Esophagus muscularis mucosa (tissue), 4 donors: ENCODE measurements at regions of chr1 and their contacts with region 1.

Region 1: DNA sequence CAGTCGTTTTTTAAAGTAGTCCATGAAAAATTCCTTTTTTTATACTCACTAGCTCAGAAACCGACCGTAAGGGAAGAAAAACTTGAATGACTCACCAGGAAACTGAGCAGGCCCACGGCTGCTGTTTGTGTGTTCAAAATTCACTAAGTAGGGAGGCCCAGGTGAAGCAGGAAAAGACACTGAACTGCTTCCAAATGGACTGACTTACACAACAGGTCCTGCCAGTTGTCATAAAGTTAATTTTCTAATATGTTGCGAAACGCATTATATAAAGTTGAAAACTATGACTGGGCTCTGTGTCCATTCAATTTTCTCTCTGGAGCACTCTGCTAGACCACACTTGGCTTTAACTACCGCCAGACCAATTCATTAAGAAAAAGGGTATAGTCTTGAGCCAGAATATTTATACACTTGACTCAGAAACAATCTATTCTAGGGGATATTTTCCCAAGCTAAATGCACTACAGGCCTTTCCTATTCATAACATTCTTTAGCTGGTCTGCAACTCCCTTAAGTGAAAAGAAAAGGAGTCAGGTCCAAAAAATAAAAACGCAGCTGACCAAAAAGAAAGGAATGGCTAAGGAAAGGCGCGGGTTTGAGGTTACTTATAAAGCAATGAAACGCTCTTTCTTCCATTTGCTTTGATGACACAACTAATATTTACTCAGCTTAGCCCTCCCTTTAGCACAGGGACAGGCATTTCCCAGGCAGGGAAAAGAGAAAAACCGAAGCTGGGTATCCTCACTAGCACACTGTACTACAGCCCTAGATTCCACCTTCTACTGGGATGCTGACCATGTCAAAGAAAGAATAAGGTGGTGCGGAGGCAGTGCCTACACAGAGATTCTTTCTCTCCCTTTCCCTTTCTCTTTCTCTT is 306.3 kb upstream of the ESRRG start:
- DNase-seq: peak; percentile 82
- H3K4me3 ChIP-seq: peak overlapping the region in 1 of 4 donors; percentile 18
- H3K27ac ChIP-seq: peak overlapping the region; percentile 64 to 72 (median 68)
- H3K4me1 ChIP-seq: peaks cover 6 to 20% (median 19%) of the 10 kb centered on the region in 4 donors
- H3K27me3 ChIP-seq: no peaks in the 10 kb centered on the region
- CTCF ChIP-seq: no peak
- EP300 ChIP-seq: no peak
- POLR2A ChIP-seq: no peak

Region 2: DNA sequence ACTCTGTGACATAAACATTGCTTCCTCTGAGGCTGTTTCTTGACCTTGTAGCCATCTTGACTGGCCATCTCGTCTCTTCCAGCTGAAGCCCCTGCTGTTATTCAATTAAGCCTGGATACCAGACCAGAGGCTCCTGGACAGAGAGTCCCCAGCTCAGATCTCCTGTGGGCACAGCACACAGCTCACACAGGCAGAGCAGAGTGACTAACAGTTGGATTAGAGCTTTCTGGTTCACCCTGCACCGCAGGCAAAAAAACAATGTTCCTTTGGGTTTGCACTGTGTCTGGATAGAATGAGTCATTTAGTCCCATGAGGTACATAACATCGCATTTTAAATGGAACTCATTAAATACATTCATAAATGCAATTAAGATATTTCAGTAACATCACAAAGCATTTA is 572.8 kb before region 1 on chr1:
- intact Hi-C with region 1: no loop called
- DNase-seq: no peak
- H3K4me3 ChIP-seq: no peak overlapping the region
- H3K27ac ChIP-seq: no peak overlapping the region
- H3K4me1 ChIP-seq: peaks cover 0 to 4% (median 1%) of the 10 kb centered on the region in 4 donors
- H3K27me3 ChIP-seq: no peaks in the 10 kb centered on the region
- CTCF ChIP-seq: no peak
- EP300 ChIP-seq: no peak
- POLR2A ChIP-seq: no peak

Region 3: GRCh38 chr1:217369271-217369981 is 339.9 kb after region 1 on chr1:
- intact Hi-C with region 1: no loop called
- DNase-seq: peak; percentile 10
- H3K4me3 ChIP-seq: no peak overlapping the region
- H3K27ac ChIP-seq: no peak overlapping the region
- H3K4me1 ChIP-seq: no peaks in the 10 kb centered on the region
- H3K27me3 ChIP-seq: no peaks in the 10 kb centered on the region
- CTCF ChIP-seq: no peak
- EP300 ChIP-seq: no peak
- POLR2A ChIP-seq: no peak

Region 4: DNA sequence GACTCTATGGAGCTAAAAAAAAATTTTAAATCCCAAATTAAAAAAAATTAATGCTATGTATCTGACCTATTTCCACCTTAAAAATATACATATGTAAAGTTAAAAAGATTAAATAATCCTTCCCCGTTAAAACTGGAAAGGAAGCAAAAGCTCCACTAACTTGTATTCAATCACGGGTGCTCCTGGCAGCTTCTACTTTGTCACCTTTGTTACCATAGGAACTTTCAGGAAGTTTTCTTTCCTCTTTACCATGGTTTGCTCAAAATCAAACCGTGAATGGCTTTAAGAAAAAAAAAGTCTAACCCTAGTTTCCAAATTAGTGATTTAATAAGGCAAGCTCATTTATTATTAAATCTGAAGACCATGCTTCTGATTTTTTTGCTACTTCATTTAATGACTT is 597.9 kb after region 1 on chr1:
- intact Hi-C with region 1: loop called (anchors 5 kb)
- DNase-seq: no peak
- H3K4me3 ChIP-seq: no peak overlapping the region
- H3K27ac ChIP-seq: no peak overlapping the region
- H3K4me1 ChIP-seq: peaks cover 10 to 48% (median 38%) of the 10 kb centered on the region in 4 donors
- H3K27me3 ChIP-seq: no peaks in the 10 kb centered on the region
- CTCF ChIP-seq: no peak
- EP300 ChIP-seq: no peak
- POLR2A ChIP-seq: no peak